ENCODE measurements at regions of chr2 and their contacts with region 1.

Region 1: GRCh38 chr2:196926562-196927375 is at the start of gene PGAP1:
- DNase-seq: peak; percentile 65 to 91 (median 81)
- ATAC-seq: peak; percentile 74
- H3K4me3 ChIP-seq: peak within 1 kb of the TSS; percentile 88 to 96
- H3K4me3 Mint-ChIP-seq: peak within 1 kb of the TSS; percentile 97
- H3K27ac ChIP-seq: peak within 1 kb of the TSS; percentile 66 to 69
- H3K27ac Mint-ChIP-seq: peak within 1 kb of the TSS; percentile 90
- H3K4me1 ChIP-seq: peaks cover 23% of the 10 kb centered on the region
- H3K4me1 Mint-ChIP-seq: peaks cover 33% of the 10 kb centered on the region
- H3K27me3 ChIP-seq: no peaks in the 10 kb centered on the region
- H3K27me3 Mint-ChIP-seq: no peaks in the 10 kb centered on the region
- CTCF ChIP-seq: no peak
- total RNA-seq, gene PGAP1: 11.6 to 12.3 TPM

Region 2: DNA sequence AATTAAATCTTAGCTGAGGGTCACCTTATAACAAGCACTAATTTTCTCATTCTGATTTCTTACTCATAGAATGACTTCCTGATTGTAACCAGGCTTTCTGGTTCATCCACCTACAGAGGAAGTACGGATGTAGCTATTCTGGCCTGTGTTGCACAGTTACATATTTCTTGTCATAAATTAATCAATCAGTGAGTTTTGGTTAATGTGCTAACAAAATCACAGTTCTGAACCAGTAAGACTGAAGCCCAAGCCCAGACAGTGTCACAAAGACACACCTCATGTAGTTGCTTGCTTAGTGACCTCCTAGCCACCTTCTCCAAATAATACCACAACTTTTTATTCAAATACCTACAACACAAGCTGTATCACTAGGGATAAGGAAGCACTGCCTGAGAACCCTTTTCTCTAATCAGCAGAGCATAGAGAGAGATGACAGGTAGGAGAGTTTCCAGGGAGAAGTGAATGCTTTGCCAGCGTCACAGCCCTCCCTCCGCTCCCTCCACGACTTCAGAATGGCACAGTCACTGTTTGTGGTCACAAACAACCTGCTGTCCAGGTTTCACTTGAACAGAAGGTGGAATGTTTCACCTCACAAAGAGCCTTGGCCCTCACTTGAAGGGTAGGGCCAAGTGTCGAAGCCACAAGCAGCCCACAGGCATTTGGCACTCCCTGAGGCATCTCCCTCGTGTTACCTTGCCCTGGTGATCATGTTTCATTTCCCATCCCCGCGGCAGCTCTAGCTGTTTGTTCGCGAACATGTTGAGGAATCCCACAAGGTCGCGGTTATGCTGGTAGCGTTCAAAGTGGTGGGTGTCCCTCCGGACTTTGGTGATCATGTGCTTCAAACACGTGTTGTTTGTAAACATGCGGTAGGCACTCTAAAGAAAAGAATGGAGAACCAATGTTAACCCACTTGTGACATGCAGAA is 634.6 kb before region 1 on chr2:
- CTCF ChIA-PET with region 1: no interaction called
- POLR2A ChIA-PET with region 1: no interaction called
- intact Hi-C with region 1: no loop called
- DNase-seq: peak in 2 of 9 experiments; percentile 31 to 56
- ATAC-seq: no peak
- H3K4me3 ChIP-seq: no peak overlapping the region
- H3K4me3 Mint-ChIP-seq: no peak overlapping the region
- H3K27ac ChIP-seq: peak overlapping the region in 1 of 2 experiments; percentile 17
- H3K27ac Mint-ChIP-seq: no peak overlapping the region
- H3K4me1 ChIP-seq: peaks cover 15% of the 10 kb centered on the region
- H3K4me1 Mint-ChIP-seq: peaks cover 28% of the 10 kb centered on the region
- H3K27me3 ChIP-seq: no peaks in the 10 kb centered on the region
- H3K27me3 Mint-ChIP-seq: no peaks in the 10 kb centered on the region
- CTCF ChIP-seq: no peak

Region 3: GRCh38 chr2:196798980-196799379 is 127.8 kb before region 1 on chr2:
- CTCF ChIA-PET with region 1: interaction called, 4 read pairs
- POLR2A ChIA-PET with region 1: no interaction called
- intact Hi-C with region 1: loop called (anchors 2 to 5 kb)
- DNase-seq: no peak
- ATAC-seq: peak; percentile 7
- H3K4me3 ChIP-seq: peak overlapping the region; percentile 71 to 76
- H3K4me3 Mint-ChIP-seq: peak overlapping the region; percentile 100
- H3K27ac ChIP-seq: peak overlapping the region; percentile 65 to 74
- H3K27ac Mint-ChIP-seq: peak overlapping the region; percentile 99
- H3K4me1 ChIP-seq: peaks cover 10% of the 10 kb centered on the region
- H3K4me1 Mint-ChIP-seq: peaks cover 36% of the 10 kb centered on the region
- H3K27me3 ChIP-seq: no peaks in the 10 kb centered on the region
- H3K27me3 Mint-ChIP-seq: peaks cover 12% of the 10 kb centered on the region
- CTCF ChIP-seq: no peak

Region 4: GRCh38 chr2:196839574-196839973 is 87.2 kb before region 1 on chr2:
- CTCF ChIA-PET with region 1: no interaction called
- POLR2A ChIA-PET with region 1: no interaction called
- intact Hi-C with region 1: no loop called
- DNase-seq: no peak
- ATAC-seq: no peak
- H3K4me3 ChIP-seq: no peak overlapping the region
- H3K4me3 Mint-ChIP-seq: no peak overlapping the region
- H3K27ac ChIP-seq: no peak overlapping the region
- H3K27ac Mint-ChIP-seq: no peak overlapping the region
- H3K4me1 ChIP-seq: no peaks in the 10 kb centered on the region
- H3K4me1 Mint-ChIP-seq: no peaks in the 10 kb centered on the region
- H3K27me3 ChIP-seq: no peaks in the 10 kb centered on the region
- H3K27me3 Mint-ChIP-seq: no peaks in the 10 kb centered on the region
- CTCF ChIP-seq: no peak

Region 5: DNA sequence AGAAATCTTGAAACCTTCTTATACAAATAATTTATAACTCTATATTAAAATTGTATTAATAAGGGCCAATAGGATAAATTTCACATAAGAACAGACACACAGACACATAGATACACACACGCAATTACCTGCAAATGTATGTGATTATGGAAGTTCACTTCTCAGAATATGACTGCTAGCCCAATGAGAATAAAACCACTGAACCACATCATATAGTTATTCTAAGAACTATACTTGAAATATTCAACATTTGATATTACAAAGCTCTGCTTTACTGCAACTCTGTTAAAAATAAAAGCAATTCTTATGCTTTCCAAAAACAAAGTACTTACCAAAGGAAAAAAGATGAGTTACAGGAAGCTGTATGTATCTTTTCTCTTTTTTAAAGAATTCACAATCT is 51.4 kb before region 1 on chr2:
- CTCF ChIA-PET with region 1: no interaction called
- POLR2A ChIA-PET with region 1: no interaction called
- intact Hi-C with region 1: loop called in 1 of 2 experiments (anchors 10 kb)
- DNase-seq: no peak
- ATAC-seq: no peak
- H3K4me3 ChIP-seq: no peak overlapping the region
- H3K4me3 Mint-ChIP-seq: no peak overlapping the region
- H3K27ac ChIP-seq: no peak overlapping the region
- H3K27ac Mint-ChIP-seq: no peak overlapping the region
- H3K4me1 ChIP-seq: no peaks in the 10 kb centered on the region
- H3K4me1 Mint-ChIP-seq: peaks cover 2% of the 10 kb centered on the region
- H3K27me3 ChIP-seq: no peaks in the 10 kb centered on the region
- H3K27me3 Mint-ChIP-seq: no peaks in the 10 kb centered on the region
- CTCF ChIP-seq: no peak

Region 6: DNA sequence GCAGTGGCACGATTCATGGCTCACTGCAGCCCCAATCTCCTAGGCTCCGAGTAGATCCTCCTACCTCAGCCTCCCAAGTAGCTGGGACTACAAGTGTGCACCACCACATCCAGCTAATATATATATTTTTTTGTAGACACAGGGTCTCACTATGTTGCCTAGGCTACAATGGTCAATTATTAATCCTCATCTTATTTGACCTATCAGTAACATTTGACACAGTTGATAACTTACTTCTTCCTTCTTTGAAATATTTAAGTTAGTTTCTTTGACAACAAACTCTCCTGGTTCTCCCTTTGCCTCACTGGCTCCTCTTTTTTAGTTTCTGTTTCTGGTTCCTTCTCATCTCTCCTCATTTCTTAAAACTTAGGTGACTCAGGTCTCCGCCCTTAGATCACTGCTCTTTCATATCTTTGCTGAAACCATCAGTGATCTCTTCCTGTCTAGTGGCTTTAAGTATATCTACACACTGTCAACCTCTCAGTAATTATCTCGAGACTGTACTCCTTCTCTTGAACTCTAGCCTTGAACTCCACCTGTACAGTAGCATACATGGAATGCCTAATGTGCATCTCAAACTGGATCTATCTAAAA is 11.8 kb before region 1 on chr2:
- CTCF ChIA-PET with region 1: interaction called, 11 read pairs
- POLR2A ChIA-PET with region 1: interaction called, 3 read pairs
- intact Hi-C with region 1: loop called in 1 of 2 experiments (anchors 1 kb)
- DNase-seq: peak in 2 of 9 experiments; percentile 35 to 61
- ATAC-seq: peak; percentile 97
- H3K4me3 ChIP-seq: peak overlapping the region in 1 of 2 experiments; percentile 16
- H3K4me3 Mint-ChIP-seq: peak overlapping the region; percentile 59
- H3K27ac ChIP-seq: peak overlapping the region; percentile 26 to 47
- H3K27ac Mint-ChIP-seq: peak overlapping the region; percentile 91
- H3K4me1 ChIP-seq: peaks cover 15% of the 10 kb centered on the region
- H3K4me1 Mint-ChIP-seq: peaks cover 29% of the 10 kb centered on the region
- H3K27me3 ChIP-seq: no peaks in the 10 kb centered on the region
- H3K27me3 Mint-ChIP-seq: no peaks in the 10 kb centered on the region
- CTCF ChIP-seq: no peak

Region 7: DNA sequence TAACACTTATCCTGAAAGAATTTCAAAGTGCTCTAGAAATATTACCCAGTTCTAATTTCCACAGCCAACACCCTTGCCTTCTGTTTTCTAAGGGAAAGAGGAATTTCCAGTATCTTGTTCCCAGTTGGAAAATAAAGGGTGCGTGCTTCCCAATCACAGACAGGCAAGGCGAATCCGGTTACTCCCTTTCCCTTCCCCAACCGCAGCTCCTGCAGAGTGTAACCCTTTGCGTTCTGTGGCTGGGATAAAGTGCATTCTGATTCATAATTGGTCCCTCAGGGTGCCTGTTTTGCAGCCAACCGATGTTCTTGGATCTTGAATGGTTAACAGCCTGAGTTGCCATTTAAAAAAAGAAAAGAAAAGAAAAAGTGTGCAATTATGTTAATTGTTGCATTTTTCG is 40.3 kb after region 1 on chr2:
- CTCF ChIA-PET with region 1: no interaction called
- POLR2A ChIA-PET with region 1: no interaction called
- intact Hi-C with region 1: no loop called
- DNase-seq: no peak
- ATAC-seq: no peak
- H3K4me3 ChIP-seq: no peak overlapping the region
- H3K4me3 Mint-ChIP-seq: no peak overlapping the region
- H3K27ac ChIP-seq: no peak overlapping the region
- H3K27ac Mint-ChIP-seq: no peak overlapping the region
- H3K4me1 ChIP-seq: no peaks in the 10 kb centered on the region
- H3K4me1 Mint-ChIP-seq: no peaks in the 10 kb centered on the region
- H3K27me3 ChIP-seq: no peaks in the 10 kb centered on the region
- H3K27me3 Mint-ChIP-seq: no peaks in the 10 kb centered on the region
- CTCF ChIP-seq: no peak

Region 8: DNA sequence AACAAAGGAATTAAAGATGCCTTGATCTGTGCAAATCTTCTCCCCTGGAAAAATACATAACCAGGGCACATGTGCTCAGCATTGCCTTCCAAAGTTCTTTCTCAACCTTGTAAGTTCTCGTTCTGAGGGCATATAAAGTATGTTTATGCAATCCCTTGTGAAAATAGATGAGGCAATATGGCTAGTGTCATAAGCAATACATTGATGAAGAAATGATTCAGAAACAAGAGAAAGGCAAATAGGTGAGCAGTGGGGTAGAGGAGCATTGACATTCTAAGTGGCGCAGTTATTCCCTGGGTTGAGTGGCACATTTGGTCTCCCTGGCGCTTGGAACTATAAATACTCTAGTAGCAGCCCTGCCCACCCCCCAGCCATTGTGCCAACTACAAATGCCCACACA is 57.2 kb after region 1 on chr2:
- CTCF ChIA-PET with region 1: no interaction called
- POLR2A ChIA-PET with region 1: no interaction called
- intact Hi-C with region 1: loop called in 1 of 2 experiments (anchors 5 kb)
- DNase-seq: no peak
- ATAC-seq: no peak
- H3K4me3 ChIP-seq: no peak overlapping the region
- H3K4me3 Mint-ChIP-seq: no peak overlapping the region
- H3K27ac ChIP-seq: no peak overlapping the region
- H3K27ac Mint-ChIP-seq: peak overlapping the region; percentile 39
- H3K4me1 ChIP-seq: peaks cover 4% of the 10 kb centered on the region
- H3K4me1 Mint-ChIP-seq: peaks cover 16% of the 10 kb centered on the region
- H3K27me3 ChIP-seq: no peaks in the 10 kb centered on the region
- H3K27me3 Mint-ChIP-seq: no peaks in the 10 kb centered on the region
- CTCF ChIP-seq: no peak

Measured in CD8-positive, alpha-beta T cell (primary cell).